ENCODE measurements at regions of chr17 and their contacts with region 1.

Region 1: GRCh38 chr17:7351665-7352501 is at the start of gene KCTD11:
- DNase-seq: peak; percentile 76
- H3K4me3 ChIP-seq: peak within 1 kb of the TSS; percentile 54 to 78 (median 70)
- H3K27ac ChIP-seq: peak within 1 kb of the TSS; percentile 78
- H3K4me1 ChIP-seq: peaks cover 17% of the 10 kb centered on the region
- H3K27me3 ChIP-seq: no peaks in the 10 kb centered on the region
- CTCF ChIP-seq: peak in 1 of 2 donors; percentile 69
- POLR2A ChIP-seq: peak; percentile 57
- total RNA-seq, gene KCTD11: 3.5 and 3.8 TPM in 2 replicates

Region 2: GRCh38 chr17:7306911-7307686 is 44.8 kb before region 1 on chr17 and contains the start of gene EIF5A:
- CTCF ChIA-PET with region 1: no interaction called
- POLR2A ChIA-PET with region 1: no interaction called
- dilution Hi-C with region 1: no loop called
- intact Hi-C with region 1: no loop called
- DNase-seq: peak; percentile 100
- H3K4me3 ChIP-seq: peak within 1 kb of the TSS; percentile 71 to 93 (median 87)
- H3K27ac ChIP-seq: peak within 1 kb of the TSS; percentile 83
- H3K4me1 ChIP-seq: peaks cover 12% of the 10 kb centered on the region
- H3K27me3 ChIP-seq: no peaks in the 10 kb centered on the region
- CTCF ChIP-seq: no peak
- POLR2A ChIP-seq: peak; percentile 83
- total RNA-seq, gene EIF5A: 847 and 859 TPM in 2 replicates

Region 3: GRCh38 chr17:7367083-7367482 is 15.2 kb after region 1 on chr17:
- CTCF ChIA-PET with region 1: interaction called, 19 read pairs
- POLR2A ChIA-PET with region 1: no interaction called
- dilution Hi-C with region 1: no loop called
- intact Hi-C with region 1: no loop called
- DNase-seq: no peak
- H3K4me3 ChIP-seq: no peak overlapping the region
- H3K27ac ChIP-seq: no peak overlapping the region
- H3K4me1 ChIP-seq: no peaks in the 10 kb centered on the region
- H3K27me3 ChIP-seq: peaks cover 2 to 3% of the 10 kb centered on the region in 2 experiments
- CTCF ChIP-seq: no peak
- POLR2A ChIP-seq: no peak

Region 4: DNA sequence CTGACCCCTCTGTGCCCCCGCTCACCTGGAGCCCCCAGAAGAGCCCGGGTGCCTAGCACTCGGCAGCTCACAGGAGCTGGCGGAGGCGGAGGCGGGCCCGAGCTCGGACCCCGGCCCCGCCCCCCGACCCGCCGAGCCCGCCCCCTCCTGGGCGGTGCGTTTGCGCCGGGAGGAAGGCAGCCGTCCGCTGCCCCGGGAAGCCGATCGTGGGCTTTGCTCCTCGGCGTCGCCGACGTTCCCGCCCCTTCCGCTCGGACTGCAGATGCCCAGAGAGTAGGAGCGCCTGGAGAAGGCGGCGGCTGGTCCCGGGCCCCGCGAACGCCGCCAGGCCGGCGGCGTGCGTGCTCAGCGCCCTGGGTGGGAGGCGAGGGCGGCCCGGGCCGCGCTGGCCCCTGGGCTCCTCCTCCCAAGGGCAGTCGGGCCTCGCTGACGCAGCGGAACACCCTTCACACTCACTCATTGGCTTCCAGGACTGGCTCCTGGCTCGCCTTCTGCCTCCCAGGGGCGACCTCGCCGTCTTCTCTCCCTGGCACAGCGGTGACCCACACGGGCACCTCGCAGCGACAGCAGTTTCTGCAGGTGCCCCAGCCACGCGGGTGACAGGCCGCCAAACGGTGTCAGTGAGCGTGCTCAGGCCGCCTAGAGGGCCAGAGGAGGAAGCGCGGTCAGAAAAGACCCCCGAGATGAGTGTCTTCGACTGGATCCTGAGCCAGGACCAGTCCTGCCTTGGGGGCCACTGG is 42.7 kb after region 1 on chr17 and contains the start of gene PLSCR3:
- CTCF ChIA-PET with region 1: interaction called, 8 read pairs
- POLR2A ChIA-PET with region 1: no interaction called
- dilution Hi-C with region 1: no loop called
- intact Hi-C with region 1: loop called (anchors 5 kb)
- DNase-seq: peak; percentile 92
- H3K4me3 ChIP-seq: peak within 1 kb of the TSS; percentile 58 to 93 (median 92)
- H3K27ac ChIP-seq: peak within 1 kb of the TSS; percentile 45
- H3K4me1 ChIP-seq: peaks cover 16% of the 10 kb centered on the region
- H3K27me3 ChIP-seq: no peaks in the 10 kb centered on the region
- CTCF ChIP-seq: peak in 1 of 2 donors; percentile 55
- POLR2A ChIP-seq: peak; percentile 90
- total RNA-seq, gene PLSCR3: 54.5 and 59.9 TPM in 2 replicates

Region 5: DNA sequence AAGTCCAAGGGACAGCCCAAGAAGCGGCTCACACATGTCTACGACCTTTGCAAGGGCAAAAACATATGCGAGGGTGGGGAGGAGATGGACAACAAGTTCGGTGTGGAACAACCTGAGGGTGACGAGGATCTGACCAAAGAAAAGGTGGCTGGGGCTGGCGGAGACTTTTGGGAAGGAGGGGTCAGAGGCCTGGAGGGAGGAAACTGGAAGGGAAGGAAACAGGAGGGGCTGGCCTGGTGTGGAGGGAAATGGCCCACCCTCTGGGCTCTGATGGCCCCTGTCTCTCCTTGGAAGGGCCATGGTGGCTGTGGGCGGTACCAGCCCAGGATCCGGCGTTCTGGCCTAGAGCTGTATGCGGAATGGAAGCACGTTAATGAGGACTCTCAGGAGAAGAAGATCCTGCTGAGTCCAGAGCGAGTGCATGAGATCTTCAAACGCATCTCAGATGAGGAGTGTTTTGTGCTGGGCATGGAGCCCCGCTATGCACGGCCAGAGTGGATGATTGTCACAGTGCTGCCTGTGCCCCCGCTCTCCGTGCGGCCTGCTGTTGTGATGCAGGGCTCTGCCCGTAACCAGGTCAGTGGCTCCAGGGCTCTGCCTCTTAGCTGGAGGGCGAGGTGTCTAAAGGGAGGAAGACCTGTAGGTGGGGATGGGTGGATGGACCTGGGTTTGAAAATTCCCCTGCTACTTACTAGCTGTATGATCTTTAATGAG is 144.7 kb after region 1 on chr17:
- CTCF ChIA-PET with region 1: interaction called, 15 read pairs
- POLR2A ChIA-PET with region 1: no interaction called
- dilution Hi-C with region 1: no loop called
- intact Hi-C with region 1: loop called (anchors 2 kb)
- DNase-seq: peak; percentile 19
- H3K4me3 ChIP-seq: no peak overlapping the region
- H3K27ac ChIP-seq: peak overlapping the region; percentile 51
- H3K4me1 ChIP-seq: peaks cover 23% of the 10 kb centered on the region
- H3K27me3 ChIP-seq: no peaks in the 10 kb centered on the region
- CTCF ChIP-seq: no peak
- POLR2A ChIP-seq: no peak

Region 6: GRCh38 chr17:7589204-7589868 is 237.5 kb after region 1 on chr17:
- CTCF ChIA-PET with region 1: interaction called, 20 read pairs
- POLR2A ChIA-PET with region 1: no interaction called
- dilution Hi-C with region 1: no loop called
- intact Hi-C with region 1: loop called (anchors 1 kb)
- DNase-seq: peak; percentile 78
- H3K4me3 ChIP-seq: no peak overlapping the region
- H3K27ac ChIP-seq: no peak overlapping the region
- H3K4me1 ChIP-seq: peaks cover 16% of the 10 kb centered on the region
- H3K27me3 ChIP-seq: no peaks in the 10 kb centered on the region
- CTCF ChIP-seq: peak; percentile 94 to 95
- POLR2A ChIP-seq: no peak

Measured in endothelial cell of umbilical vein (primary cell).